ENCODE measurements at regions of chr5 and their contacts with region 1.

Region 1: DNA sequence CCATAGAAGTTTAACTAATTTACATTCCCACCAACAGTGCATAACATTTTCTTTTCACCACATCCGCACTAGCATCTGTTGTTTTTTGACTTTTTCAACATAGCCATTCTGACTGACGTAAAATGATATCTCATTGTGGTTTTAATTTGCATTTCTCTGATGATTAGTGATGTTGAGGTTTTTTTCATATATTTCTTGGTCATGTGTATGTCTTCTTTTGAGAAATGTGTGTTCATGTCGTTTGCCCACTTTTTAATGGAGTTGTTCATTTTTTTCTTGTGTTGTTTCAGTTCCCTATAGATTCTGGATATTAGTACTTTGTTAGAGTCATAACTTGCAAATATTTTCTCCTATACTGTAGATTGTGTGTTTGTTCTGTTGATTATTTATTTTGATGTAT is 163.4 kb downstream of the FER start:
- DNase-seq: no peak
- ATAC-seq: peak; percentile 91
- H3K4me3 ChIP-seq: no peak overlapping the region
- H3K27ac ChIP-seq: no peak overlapping the region
- H3K4me1 ChIP-seq: no peaks in the 10 kb centered on the region
- H3K27me3 ChIP-seq: no peaks in the 10 kb centered on the region
- CTCF ChIP-seq: no peak
- EP300 ChIP-seq: peak; percentile 70 to 83; a peak in 3 of 4 replicates
- POLR2A ChIP-seq: no peak
- RAD21 ChIP-seq: no peak

Region 2: DNA sequence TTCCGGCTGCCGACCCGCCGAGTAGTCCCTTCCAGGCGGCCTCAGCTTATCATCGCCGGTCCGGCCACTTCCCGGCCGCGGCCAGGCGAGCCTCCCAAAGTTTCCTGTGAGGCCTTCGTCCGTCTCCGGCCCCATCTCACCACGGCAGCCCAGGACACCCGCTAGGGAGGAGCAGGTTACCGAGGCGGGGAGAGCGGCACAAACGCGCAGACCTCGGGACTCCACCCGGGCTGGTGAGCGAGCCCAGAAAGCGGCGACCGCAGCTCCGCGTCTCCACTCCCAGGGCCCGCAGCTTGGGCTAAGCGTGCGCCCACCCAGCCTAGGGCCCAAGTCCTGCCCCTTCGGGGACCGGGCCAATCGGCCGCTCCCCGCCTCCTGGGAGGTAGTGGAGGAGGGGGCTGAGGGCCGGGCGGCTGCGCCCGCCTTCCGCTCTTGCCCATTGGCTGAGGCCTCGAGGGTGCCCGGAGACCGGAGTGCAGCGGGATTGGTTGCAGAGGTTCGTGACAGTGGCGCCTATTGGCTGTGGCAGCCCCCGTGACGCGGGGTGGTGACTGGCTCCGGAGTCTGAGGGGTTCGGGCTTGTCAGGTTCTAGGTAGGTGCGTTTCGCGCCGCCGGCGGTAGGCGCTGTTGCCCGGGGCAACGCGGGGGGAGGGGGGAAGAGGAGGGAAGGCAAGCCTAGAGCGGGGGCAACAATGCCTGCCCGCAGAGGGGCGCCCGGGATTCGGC is 162.5 kb before region 1 on chr5:
- CTCF ChIA-PET with region 1: no interaction called
- POLR2A ChIA-PET with region 1: no interaction called
- RAD21 ChIA-PET with region 1: no interaction called
- SMC1A ChIA-PET with region 1: no interaction called
- in situ Hi-C with region 1: no loop called
- intact Hi-C with region 1: loop called (anchors 5 kb)
- DNase-seq: peak; percentile 97
- ATAC-seq: peak; percentile 94
- H3K4me3 ChIP-seq: peak overlapping the region; percentile 93
- H3K27ac ChIP-seq: peak overlapping the region; percentile 90
- H3K4me1 ChIP-seq: no peaks in the 10 kb centered on the region
- H3K27me3 ChIP-seq: no peaks in the 10 kb centered on the region
- CTCF ChIP-seq: peak in 1 of 3 experiments; percentile 14; a peak in 1 of 6 replicates
- EP300 ChIP-seq: no peak
- POLR2A ChIP-seq: peak; percentile 99
- RAD21 ChIP-seq: peak; percentile 31; the same call in 1 of the 2 replicates